Activated CD4-positive, alpha-beta T cell treated with anti-CD3 and anti-CD28 coated beads, Interleukin-2, amount 10 ng/mL, durations not matched to agents 24 days and 14 days (primary cell): ENCODE measurements at regions of chr5 and their contacts with region 1.

Region 1: DNA sequence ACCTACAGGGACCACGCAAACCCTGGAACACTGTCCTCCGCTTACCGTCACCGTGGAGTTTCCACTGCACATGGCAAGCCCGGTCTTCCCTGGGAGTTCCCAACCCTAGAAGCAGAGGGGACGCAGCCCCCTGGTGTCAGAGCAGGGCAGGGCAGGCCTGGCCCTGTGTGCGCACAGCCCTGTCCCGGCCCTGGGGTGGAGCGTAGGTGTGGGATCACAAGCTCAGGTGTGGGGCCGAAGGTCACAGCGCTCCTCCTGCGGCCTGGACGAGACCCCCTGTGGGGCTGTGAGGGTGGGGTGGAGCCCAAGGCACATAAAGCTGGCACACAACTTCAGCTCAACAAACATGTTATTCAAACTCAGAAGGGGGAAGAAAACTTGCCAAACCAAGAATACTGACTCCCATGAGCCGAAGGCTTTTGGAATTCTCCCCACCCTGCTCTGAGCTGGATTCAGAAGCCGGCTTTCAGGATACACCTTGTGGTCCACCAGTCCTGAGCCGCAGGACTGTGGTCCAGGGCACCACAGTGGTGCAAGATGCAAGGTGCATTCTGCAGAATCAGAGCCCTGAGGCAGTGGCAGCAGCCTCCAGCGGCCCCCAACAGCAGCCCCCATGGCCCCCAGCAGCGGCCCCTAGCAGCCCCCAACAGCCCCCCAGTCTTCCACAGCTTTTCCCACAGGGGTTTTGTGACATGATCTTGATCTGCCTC is 11.8 kb upstream of the EXOC3 start:
- DNase-seq: peak; percentile 85
- H3K4me3 Mint-ChIP-seq: no peak overlapping the region
- H3K27ac Mint-ChIP-seq: no peak overlapping the region
- H3K4me1 Mint-ChIP-seq: peaks cover 6% of the 10 kb centered on the region
- H3K27me3 Mint-ChIP-seq: no peaks in the 10 kb centered on the region

Region 2: GRCh38 chr5:188488-189481 is 242.4 kb before region 1 on chr5:
- intact Hi-C with region 1: loop called (anchors 5 kb)
- DNase-seq: peak; percentile 97
- H3K4me3 Mint-ChIP-seq: peak overlapping the region; percentile 35
- H3K27ac Mint-ChIP-seq: no peak overlapping the region
- H3K4me1 Mint-ChIP-seq: peaks cover 12% of the 10 kb centered on the region
- H3K27me3 Mint-ChIP-seq: peaks cover 4% of the 10 kb centered on the region

Region 3: DNA sequence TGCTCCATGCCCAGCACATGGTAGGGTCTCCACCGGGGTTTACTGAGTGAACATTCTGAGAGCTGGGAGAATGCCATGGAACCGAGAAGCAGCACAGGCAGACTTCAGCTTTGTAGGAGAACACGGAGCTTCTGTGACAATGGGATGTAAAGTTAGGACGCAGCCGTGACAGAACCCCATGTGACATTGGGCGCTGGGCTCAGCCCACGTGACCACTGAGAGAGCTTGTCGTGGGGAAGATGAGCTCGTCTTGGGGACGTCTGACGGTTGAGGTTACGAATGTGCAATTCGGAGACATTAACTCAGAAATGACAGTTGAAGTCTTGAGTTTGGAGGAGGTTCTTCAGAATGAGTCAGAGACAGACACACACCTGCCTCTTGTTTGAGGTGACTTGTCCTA is 199.5 kb before region 1 on chr5:
- intact Hi-C with region 1: no loop called
- DNase-seq: no peak
- H3K4me3 Mint-ChIP-seq: no peak overlapping the region
- H3K27ac Mint-ChIP-seq: peak overlapping the region; percentile 32
- H3K4me1 Mint-ChIP-seq: peaks cover 4% of the 10 kb centered on the region
- H3K27me3 Mint-ChIP-seq: no peaks in the 10 kb centered on the region

Region 4: DNA sequence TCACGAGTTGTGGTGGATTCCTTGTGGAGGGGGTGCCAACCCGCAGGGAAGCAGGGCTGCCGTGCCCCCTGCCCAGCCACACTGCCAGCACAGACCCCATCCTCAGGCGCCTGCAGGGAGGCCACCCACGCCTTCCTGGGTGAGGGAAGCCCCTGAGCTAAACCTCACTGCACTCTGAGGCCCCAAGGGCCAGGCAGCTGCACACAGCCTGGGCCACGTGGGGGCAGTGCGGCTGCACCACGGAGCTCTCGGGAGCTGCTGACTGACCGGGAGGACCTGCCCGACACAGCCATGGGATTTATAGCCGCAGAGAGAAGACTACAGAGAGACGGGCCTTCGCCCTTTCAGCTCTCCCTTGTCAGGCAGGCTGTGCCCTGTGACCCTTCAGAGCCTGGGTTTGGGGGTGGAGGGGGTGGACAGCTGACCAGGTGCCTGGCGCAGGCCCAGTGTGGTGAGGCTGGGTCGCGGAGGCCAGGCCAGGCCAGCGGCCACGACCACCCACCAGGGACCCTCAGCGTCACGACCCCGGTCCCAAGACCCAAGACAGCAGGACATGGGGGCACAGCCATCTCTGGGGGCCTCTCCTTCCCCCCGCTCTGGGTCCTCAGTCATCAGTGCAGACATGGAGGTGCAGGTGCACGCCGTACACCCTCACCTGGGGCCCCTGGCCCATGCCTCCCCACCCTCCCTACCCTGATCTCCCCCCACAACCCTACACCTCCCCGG is 113.9 kb before region 1 on chr5:
- intact Hi-C with region 1: loop called (anchors 1 kb)
- DNase-seq: peak; percentile 80
- H3K4me3 Mint-ChIP-seq: no peak overlapping the region
- H3K27ac Mint-ChIP-seq: no peak overlapping the region
- H3K4me1 Mint-ChIP-seq: peaks cover 4% of the 10 kb centered on the region
- H3K27me3 Mint-ChIP-seq: peaks cover 11% of the 10 kb centered on the region

Region 5: GRCh38 chr5:541539-542318 is 110.6 kb after region 1 on chr5:
- intact Hi-C with region 1: no loop called
- DNase-seq: no peak
- H3K4me3 Mint-ChIP-seq: no peak overlapping the region
- H3K27ac Mint-ChIP-seq: no peak overlapping the region
- H3K4me1 Mint-ChIP-seq: peaks cover 8% of the 10 kb centered on the region
- H3K27me3 Mint-ChIP-seq: peaks cover 2% of the 10 kb centered on the region

Region 6: GRCh38 chr5:672329-673085 is 241.4 kb after region 1 on chr5:
- intact Hi-C with region 1: no loop called
- DNase-seq: peak; percentile 86
- H3K4me3 Mint-ChIP-seq: no peak overlapping the region
- H3K27ac Mint-ChIP-seq: peak overlapping the region; percentile 41
- H3K4me1 Mint-ChIP-seq: peaks cover 3% of the 10 kb centered on the region
- H3K27me3 Mint-ChIP-seq: peaks cover 5% of the 10 kb centered on the region

Region 7: DNA sequence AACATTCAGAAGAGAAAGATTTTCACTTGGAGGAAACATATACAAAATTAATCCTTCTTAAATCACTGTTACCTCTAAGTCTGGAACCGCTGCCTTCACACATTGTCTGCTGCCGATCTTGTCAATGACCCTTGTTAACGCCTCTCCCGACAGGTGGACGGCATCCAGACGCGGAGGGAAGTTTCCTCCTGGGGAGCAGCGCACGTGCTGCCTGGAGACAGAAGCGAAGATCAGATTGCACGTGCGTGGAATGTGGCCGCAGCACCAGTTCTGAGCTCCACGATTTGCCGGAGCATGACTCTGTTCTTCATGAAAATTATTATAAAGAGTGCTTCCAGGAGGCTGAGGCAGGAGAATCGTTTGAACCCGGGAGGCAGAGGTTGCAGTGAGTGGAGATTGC is 1635.2 kb after region 1 on chr5:
- intact Hi-C with region 1: no loop called
- DNase-seq: peak; percentile 21
- H3K4me3 Mint-ChIP-seq: no peak overlapping the region
- H3K27ac Mint-ChIP-seq: no peak overlapping the region
- H3K4me1 Mint-ChIP-seq: no peaks in the 10 kb centered on the region
- H3K27me3 Mint-ChIP-seq: no peaks in the 10 kb centered on the region